Activated CD4-positive, alpha-beta T cell treated with anti-CD3 and anti-CD28 coated beads, Interleukin-2, amount 10 ng/mL, durations not matched to agents 24 days and 14 days (primary cell): ENCODE measurements at regions of chr3 and their contacts with region 1.

Region 1: GRCh38 chr3:158109804-158110657 is at the start of gene RSRC1:
- DNase-seq: peak; percentile 94
- H3K4me3 Mint-ChIP-seq: peak within 1 kb of the TSS; percentile 91
- H3K27ac Mint-ChIP-seq: peak within 1 kb of the TSS; percentile 75
- H3K4me1 Mint-ChIP-seq: peaks cover 43% of the 10 kb centered on the region
- H3K27me3 Mint-ChIP-seq: peaks cover 36% of the 10 kb centered on the region
- total RNA-seq, gene RSRC1: 41.7 and 44.6 TPM in 2 replicates

Region 2: DNA sequence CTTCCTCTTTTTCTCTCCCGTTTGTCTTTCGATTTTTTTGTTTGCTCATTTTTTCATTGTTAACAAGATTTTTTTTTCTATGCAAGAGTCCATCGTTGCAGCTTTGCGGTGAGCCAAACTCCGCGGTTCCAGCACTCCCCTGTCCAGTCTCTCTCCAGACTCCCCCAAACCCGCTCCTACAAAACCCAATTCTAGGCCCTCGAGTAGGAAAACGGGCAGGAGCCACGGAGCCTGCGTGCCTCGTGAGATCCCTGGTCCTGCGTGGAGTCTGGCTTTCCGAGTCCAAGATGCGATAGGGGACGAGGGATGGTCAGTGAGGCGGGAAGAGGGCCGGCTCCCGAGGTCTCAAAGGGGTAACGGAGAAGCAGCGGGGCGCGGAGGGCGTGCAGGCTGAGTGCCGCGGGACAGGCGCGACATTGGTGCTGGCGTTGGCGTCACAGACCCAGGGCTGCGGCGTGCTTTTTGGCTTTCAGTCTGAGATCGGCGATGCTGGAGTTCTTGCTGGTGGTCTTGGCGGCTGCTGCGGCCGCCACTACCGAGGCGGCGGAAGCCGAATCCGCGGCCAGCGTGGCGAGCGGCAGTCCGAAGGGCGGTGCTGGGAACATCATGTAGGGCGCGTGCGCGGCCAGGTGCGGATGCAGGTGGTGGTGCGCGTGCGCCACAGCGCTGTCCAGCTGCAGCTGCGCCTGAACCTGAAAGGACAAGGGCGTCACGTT is 12.3 kb before region 1 on chr3:
- intact Hi-C with region 1: loop called (anchors 1 kb)
- DNase-seq: peak; percentile 93
- H3K4me3 Mint-ChIP-seq: peak overlapping the region; percentile 89
- H3K27ac Mint-ChIP-seq: peak overlapping the region; percentile 62
- H3K4me1 Mint-ChIP-seq: peaks cover 16% of the 10 kb centered on the region
- H3K27me3 Mint-ChIP-seq: peaks cover 85% of the 10 kb centered on the region

Region 3: DNA sequence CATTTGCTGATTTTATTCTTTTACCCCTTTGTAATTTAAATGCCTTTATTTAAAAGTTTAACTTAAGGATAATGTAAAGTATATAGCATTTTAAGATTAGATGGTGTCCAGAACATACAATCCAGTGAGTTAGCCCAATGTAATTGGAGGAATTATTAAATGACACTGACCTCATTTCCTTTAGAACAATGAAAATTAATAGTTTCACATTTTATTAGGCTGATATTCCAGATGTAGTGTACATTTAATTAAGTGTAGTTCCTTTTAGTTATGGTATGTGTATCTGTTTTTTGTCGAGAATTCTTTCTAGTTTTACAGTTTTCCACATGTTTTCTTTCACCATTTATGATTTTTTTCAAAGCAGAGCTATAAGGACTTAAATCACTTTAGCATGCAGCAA is 75.7 kb after region 1 on chr3:
- intact Hi-C with region 1: no loop called
- DNase-seq: no peak
- H3K4me3 Mint-ChIP-seq: no peak overlapping the region
- H3K27ac Mint-ChIP-seq: no peak overlapping the region
- H3K4me1 Mint-ChIP-seq: no peaks in the 10 kb centered on the region
- H3K27me3 Mint-ChIP-seq: no peaks in the 10 kb centered on the region

Region 4: GRCh38 chr3:158313338-158313927 is 203.4 kb after region 1 on chr3:
- intact Hi-C with region 1: loop called (anchors 1 kb)
- DNase-seq: no peak
- H3K4me3 Mint-ChIP-seq: no peak overlapping the region
- H3K27ac Mint-ChIP-seq: no peak overlapping the region
- H3K4me1 Mint-ChIP-seq: no peaks in the 10 kb centered on the region
- H3K27me3 Mint-ChIP-seq: no peaks in the 10 kb centered on the region

Region 5: GRCh38 chr3:158644345-158644908 is 534.4 kb after region 1 on chr3 and contains the start of gene GFM1:
- intact Hi-C with region 1: loop called (anchors 5 kb)
- DNase-seq: peak; percentile 96
- H3K4me3 Mint-ChIP-seq: peak within 1 kb of the TSS; percentile 93
- H3K27ac Mint-ChIP-seq: peak within 1 kb of the TSS; percentile 92
- H3K4me1 Mint-ChIP-seq: peaks cover 24% of the 10 kb centered on the region
- H3K27me3 Mint-ChIP-seq: no peaks in the 10 kb centered on the region
- total RNA-seq, gene GFM1: 73.4 and 75.6 TPM in 2 replicates

Region 6: DNA sequence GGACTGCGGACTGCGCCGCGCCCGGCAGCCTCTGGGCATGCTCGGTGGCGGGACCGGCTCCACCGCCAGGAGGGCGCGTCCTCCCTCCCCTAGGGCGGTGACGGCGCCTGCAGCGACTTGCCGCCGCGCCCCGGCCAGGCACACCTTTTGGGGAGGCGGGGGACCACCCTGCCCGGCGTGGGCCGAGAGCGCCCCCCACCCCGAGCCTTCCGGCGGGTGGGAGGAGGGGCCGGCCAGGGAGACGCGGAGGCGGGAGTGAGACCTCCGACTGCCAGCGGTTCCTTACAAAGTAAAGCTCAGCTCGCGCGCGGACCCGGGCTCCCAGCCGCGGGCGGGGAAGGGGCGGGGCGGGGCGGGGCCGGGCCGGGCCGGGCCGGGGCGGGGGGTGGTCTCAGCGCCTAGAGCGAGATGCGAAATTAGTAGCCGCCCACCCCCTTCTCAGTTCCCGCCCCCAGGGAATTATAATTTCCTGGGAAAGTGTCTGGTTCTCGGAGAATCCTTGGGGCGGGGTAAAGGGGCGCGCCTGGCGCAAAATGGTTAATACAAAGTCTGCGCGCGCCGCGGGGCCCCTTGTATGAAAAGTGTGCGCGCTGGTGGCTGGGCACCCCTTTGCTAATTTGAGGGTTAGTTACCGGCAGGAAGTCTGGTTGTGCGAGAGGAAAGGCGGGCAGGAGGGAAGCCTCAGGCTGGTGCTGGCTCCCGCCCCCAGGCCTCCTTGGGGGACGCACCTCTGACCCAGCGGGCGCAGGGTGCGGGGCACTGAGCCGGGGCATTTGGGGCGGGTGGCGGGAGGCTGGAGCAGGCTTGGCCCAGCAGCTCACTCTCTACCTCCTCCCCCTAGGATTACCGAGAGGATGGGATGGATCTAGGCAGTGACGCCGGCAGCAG is 1653.8 kb after region 1 on chr3:
- intact Hi-C with region 1: loop called (anchors 10 kb)
- DNase-seq: peak; percentile 85
- H3K4me3 Mint-ChIP-seq: peak overlapping the region; percentile 93
- H3K27ac Mint-ChIP-seq: peak overlapping the region; percentile 72
- H3K4me1 Mint-ChIP-seq: peaks cover 18% of the 10 kb centered on the region
- H3K27me3 Mint-ChIP-seq: peaks cover 61% of the 10 kb centered on the region